PC-9 (cell line): ENCODE measurements at regions of chr1 and their contacts with region 1.

Region 1: GRCh38 chr1:9166289-9167235 is 37.7 kb upstream of the GPR157 start:
- DNase-seq: no peak
- H3K4me3 ChIP-seq: no peak overlapping the region
- H3K27ac ChIP-seq: no peak overlapping the region
- H3K4me1 ChIP-seq: peaks cover 40% of the 10 kb centered on the region
- H3K27me3 ChIP-seq: no peaks in the 10 kb centered on the region
- CTCF ChIP-seq: no peak

Region 2: DNA sequence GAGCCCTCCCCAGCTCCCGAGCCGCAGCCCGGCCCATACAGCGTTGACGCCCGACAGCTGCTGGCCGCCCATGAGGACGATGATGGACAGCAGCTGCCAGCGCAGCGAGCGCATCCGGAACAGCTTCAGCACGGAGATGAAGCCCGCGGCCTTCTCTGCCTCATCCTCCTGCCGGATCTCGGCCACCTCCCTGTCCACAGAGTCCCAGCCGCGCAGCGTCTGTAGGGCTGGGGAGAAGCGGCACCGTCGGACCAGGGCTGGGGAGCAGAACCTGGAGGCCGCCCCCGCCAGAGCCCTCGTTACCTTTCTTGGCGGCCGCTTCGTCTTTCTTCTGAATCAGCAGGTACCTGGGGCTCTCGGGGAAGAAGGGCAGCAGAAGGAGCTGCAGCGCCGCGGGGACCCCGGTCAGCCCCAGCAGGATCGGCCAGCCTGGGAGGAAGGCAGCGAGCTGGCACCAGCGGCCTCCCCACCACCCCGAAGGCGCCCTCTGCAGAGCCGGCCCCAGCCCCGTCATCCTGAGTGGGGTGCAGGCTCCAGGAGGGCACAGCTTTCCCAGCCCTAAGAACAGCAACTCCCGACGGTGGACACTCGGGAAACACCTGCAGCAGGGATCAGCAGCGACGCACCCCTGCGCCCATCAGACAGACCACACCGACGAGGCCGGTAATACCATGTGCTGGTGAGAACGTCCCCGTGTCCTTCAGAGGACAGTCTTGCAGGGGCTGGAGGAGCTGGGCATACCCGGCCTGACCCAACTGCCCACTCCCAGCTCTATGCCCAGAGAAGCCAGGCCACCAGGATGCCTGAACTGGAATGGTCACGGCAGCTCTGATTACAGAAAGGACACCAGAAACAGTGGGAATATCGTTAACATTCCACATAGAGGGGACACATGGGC is 126.6 kb before region 1 on chr1:
- CTCF ChIA-PET with region 1: no interaction called
- POLR2A ChIA-PET with region 1: no interaction called
- intact Hi-C with region 1: no loop called
- DNase-seq: no peak
- H3K4me3 ChIP-seq: no peak overlapping the region
- H3K27ac ChIP-seq: no peak overlapping the region
- H3K4me1 ChIP-seq: peaks cover 8% of the 10 kb centered on the region
- H3K27me3 ChIP-seq: no peaks in the 10 kb centered on the region
- CTCF ChIP-seq: no peak

Region 3: DNA sequence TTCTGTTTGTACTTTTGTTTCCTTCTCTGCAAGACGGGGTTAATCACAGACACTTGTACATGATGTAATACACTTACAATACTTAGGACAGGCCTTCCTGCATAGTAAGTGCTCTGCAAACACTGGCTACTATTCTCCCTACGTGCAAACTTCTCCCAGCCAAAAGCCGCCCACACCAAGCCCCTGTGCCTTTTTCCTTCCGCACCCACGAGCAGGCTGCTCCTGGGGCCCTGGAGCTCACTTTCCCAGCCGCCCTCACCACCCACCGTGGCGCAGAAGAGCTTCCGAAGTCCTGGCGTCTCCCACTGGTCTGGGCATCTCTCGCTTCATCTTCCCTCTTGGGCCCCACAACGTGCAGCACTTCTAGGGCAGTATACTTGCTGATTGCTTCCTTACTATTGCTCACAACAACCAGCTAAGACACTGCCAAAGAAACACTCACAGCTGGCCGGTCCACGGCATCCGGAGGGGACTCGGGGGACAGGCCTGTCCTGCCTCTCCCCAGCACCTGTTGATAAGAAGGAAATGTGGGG is 15.2 kb before region 1 on chr1:
- CTCF ChIA-PET with region 1: no interaction called
- POLR2A ChIA-PET with region 1: no interaction called
- intact Hi-C with region 1: no loop called
- DNase-seq: no peak
- H3K4me3 ChIP-seq: no peak overlapping the region
- H3K27ac ChIP-seq: no peak overlapping the region
- H3K4me1 ChIP-seq: no peaks in the 10 kb centered on the region
- H3K27me3 ChIP-seq: no peaks in the 10 kb centered on the region
- CTCF ChIP-seq: no peak

Region 4: DNA sequence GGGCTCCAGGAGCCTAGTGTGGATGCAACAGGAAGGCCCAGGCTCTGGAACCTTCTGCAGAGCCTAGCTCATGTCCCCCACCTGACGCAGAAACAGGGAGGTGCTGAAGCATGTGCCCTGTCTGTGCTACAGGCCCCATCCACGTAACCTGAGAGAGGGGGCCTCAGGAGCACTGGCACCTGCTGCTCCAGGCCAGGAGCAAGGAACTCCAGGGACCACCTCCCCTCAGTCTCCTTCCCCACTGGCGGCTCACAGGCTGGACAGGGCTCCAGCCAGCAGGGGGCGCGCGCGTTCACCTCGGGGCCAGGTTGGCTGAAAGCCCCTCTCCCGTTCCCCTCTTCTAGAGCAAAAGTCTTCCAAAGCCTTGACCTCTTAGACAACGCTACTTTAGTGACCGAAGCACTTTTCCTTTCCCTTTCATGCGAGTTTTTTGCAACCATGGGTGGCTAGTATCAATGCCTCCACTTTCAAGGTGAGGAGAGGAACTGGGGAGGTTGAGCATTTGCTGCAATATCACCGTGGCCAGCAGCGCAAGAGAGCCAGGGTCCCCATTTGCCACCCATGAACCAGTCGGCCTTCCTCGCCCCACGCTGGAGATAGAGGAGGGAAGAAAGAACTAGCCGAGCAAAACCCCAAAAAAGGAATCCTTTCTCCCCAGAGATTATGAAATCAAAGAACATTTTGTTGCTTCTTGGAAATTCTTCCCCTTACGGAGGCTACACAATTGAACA is 14.8 kb after region 1 on chr1:
- CTCF ChIA-PET with region 1: interaction called, 8 read pairs
- POLR2A ChIA-PET with region 1: no interaction called
- intact Hi-C with region 1: loop called (anchors 2 kb)
- DNase-seq: peak in 1 of 2 experiments; percentile 64
- H3K4me3 ChIP-seq: peak overlapping the region; percentile 48; the same call in 1 of the 2 replicates
- H3K27ac ChIP-seq: no peak overlapping the region
- H3K4me1 ChIP-seq: peaks cover 16% of the 10 kb centered on the region
- H3K27me3 ChIP-seq: no peaks in the 10 kb centered on the region
- CTCF ChIP-seq: peak; percentile 84

Region 5: GRCh38 chr1:9275567-9276034 is 109.0 kb after region 1 on chr1:
- CTCF ChIA-PET with region 1: no interaction called
- POLR2A ChIA-PET with region 1: interaction called, 11 read pairs
- intact Hi-C with region 1: no loop called
- DNase-seq: peak; percentile 79 to 85
- H3K4me3 ChIP-seq: no peak overlapping the region
- H3K27ac ChIP-seq: no peak overlapping the region
- H3K4me1 ChIP-seq: peaks cover 19% of the 10 kb centered on the region
- H3K27me3 ChIP-seq: no peaks in the 10 kb centered on the region
- CTCF ChIP-seq: no peak